Breast epithelium (tissue), 4 donors: ENCODE measurements at regions of chr11 and their contacts with region 1.

Region 1: DNA sequence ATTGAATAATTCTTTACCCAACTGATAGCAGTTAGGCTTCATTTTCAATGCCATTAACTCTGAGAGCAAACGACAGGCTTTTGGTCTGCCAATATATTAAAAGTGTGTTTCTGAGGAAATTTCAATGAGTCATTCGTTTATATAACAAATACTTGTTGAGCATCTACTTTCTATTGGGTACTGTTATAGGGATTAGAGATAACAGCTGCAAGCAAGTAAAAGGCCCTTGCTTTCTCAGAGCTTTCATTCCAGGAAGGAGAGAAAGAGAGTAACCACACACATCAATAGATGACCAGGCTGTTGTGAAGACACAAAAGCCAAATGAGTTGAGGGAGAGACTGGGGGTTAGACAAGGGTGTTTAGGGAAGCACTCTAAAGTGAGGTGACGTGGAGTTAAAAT is 35.7 kb downstream of the CD44 start:
- DNase-seq: no peak
- H3K4me3 ChIP-seq: no peak overlapping the region
- H3K27ac ChIP-seq: peak overlapping the region; percentile 72 to 74
- H3K4me1 ChIP-seq: peaks cover 0 to 8% of the 10 kb centered on the region in 2 donors
- H3K27me3 ChIP-seq: no peaks in the 10 kb centered on the region
- CTCF ChIP-seq: no peak
- POLR2A ChIP-seq: no peak

Region 2: DNA sequence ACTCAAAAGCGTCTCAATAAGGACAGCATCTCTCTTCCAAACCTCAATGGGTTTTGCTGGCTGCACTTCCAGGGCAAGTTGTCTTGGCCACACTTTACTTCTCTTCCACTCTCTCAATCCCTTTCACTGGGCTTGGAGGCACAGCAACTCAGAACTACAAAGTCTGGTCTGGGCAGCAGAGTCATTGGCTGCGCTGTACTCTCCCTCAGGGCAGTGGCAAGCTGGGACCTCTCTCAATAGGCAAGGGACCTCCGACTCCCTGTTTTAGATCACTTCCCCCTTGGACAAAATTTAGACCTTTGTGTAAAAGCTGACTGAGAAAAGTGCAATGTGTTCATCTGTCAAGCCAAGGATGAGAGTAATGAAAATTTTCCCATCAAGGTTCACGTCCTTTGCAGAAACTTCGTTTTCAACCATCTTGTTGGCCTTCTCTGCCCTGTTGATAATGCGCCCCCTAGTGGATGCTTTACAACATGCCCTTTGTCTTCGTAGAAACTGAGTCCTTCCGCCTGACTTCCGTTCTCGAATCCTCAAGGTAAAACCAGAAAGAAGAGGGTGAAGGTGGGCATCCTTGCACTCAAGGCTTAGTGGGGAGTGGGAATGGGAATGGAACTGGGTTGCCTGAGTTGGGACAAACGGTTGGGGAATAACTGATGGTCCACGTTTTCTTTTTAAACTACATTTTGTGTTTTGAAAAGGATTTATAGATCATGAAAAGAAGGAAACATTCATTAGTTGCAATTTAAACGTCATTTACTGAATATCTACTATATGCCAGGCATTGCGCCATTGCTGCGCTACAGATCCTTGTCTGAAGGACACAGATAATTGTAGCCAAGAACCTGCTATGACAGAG is 63.4 kb after region 1 on chr11:
- intact Hi-C with region 1: loop called (anchors 5 kb)
- DNase-seq: no peak
- H3K4me3 ChIP-seq: no peak overlapping the region
- H3K27ac ChIP-seq: no peak overlapping the region
- H3K4me1 ChIP-seq: peaks cover 0 to 6% of the 10 kb centered on the region in 2 donors
- H3K27me3 ChIP-seq: no peaks in the 10 kb centered on the region
- CTCF ChIP-seq: peak in 2 of 3 donors; percentile 33 to 37
- POLR2A ChIP-seq: no peak